Activated CD4-positive, alpha-beta memory T cell treated with anti-CD3 and anti-CD28 coated beads, Interleukin-2, amount 10 ng/mL, durations not matched to agents 7 days and 5 days (primary cell): ENCODE measurements at regions of chr15 and their contacts with region 1.

Region 1: GRCh38 chr15:78299101-78299930 is at the start of gene SKIC8:
- DNase-seq: peak; percentile 92
- H3K4me3 Mint-ChIP-seq: peak within 1 kb of the TSS; percentile 96
- H3K27ac Mint-ChIP-seq: peak within 1 kb of the TSS; percentile 81
- H3K4me1 Mint-ChIP-seq: peaks cover 37% of the 10 kb centered on the region
- H3K27me3 Mint-ChIP-seq: no peaks in the 10 kb centered on the region
- total RNA-seq, gene SKIC8: 35.4 to 35.7 TPM

Region 2: GRCh38 chr15:78264304-78265136 is 34.8 kb before region 1 on chr15 and contains the start of gene DNAJA4:
- CTCF ChIA-PET with region 1: interaction called, 21 read pairs
- POLR2A ChIA-PET with region 1: interaction called, 33 read pairs
- DNase-seq: peak; percentile 68
- H3K4me3 Mint-ChIP-seq: peak within 1 kb of the TSS; percentile 83
- H3K27ac Mint-ChIP-seq: peak within 1 kb of the TSS; percentile 71
- H3K4me1 Mint-ChIP-seq: peaks cover 29% of the 10 kb centered on the region
- H3K27me3 Mint-ChIP-seq: no peaks in the 10 kb centered on the region
- total RNA-seq, gene DNAJA4: 27.7 to 30.9 TPM

Region 3: DNA sequence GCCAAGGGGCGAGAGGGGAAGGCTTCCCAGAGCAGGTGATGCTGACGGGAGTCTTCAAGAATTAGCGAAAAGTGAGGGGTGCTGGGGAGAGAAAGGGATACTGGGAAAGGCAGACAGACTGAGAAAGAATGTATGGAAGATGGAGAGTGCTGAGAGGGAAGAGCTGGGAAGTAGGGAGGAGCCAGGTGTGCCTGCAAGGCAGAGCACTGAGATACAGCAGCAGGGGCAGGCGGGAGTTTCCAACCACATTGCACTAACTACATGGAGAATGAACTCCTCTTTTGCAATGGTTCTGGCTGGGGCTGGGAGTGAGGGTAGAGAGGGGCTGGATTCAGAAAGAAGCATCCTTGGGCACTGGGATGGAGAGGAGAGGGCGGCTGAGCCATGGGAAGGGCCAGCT is 24.8 kb after region 1 on chr15:
- CTCF ChIA-PET with region 1: no interaction called
- POLR2A ChIA-PET with region 1: no interaction called
- DNase-seq: no peak
- H3K4me3 Mint-ChIP-seq: no peak overlapping the region
- H3K27ac Mint-ChIP-seq: no peak overlapping the region
- H3K4me1 Mint-ChIP-seq: no peaks in the 10 kb centered on the region
- H3K27me3 Mint-ChIP-seq: peaks cover 3% of the 10 kb centered on the region